A549 (cell line): ENCODE measurements at regions of chr14 and their contacts with region 1.

Region 1: GRCh38 chr14:64294672-64295413 is 672 bp upstream of the ESR2 start:
- DNase-seq: peak; percentile 68 to 84
- ATAC-seq: peak; percentile 93 to 98
- H3K4me3 ChIP-seq: peak overlapping the region; percentile 43
- H3K27ac ChIP-seq: peak overlapping the region; percentile 20 to 28; a peak in 2 of 6 replicates
- H3K4me1 ChIP-seq: 0 out of 3 replicates have a peak, but pooled peaks cover 3% of the 10 kb centered on the region
- CTCF ChIP-seq: peak; percentile 94
- EP300 ChIP-seq: no peak
- POLR2A ChIP-seq: no peak
- RAD21 ChIP-seq: peak; percentile 79 to 93

Region 2: GRCh38 chr14:63800651-63801375 is 494.0 kb before region 1 on chr14:
- CTCF ChIA-PET with region 1: interaction called, 36 read pairs
- POLR2A ChIA-PET with region 1: no interaction called
- DNase-seq: no peak
- ATAC-seq: peak in 1 of 2 experiments; percentile 36; a peak in 1 of 6 replicates
- H3K4me3 ChIP-seq: no peak overlapping the region
- H3K27ac ChIP-seq: no peak overlapping the region
- H3K4me1 ChIP-seq: no peaks in the 10 kb centered on the region
- CTCF ChIP-seq: no peak
- EP300 ChIP-seq: no peak
- POLR2A ChIP-seq: no peak
- RAD21 ChIP-seq: no peak

Region 3: GRCh38 chr14:64012720-64013119 is 282.1 kb before region 1 on chr14:
- CTCF ChIA-PET with region 1: interaction called, 100 read pairs
- POLR2A ChIA-PET with region 1: no interaction called
- DNase-seq: no peak
- ATAC-seq: no peak
- H3K4me3 ChIP-seq: no peak overlapping the region
- H3K27ac ChIP-seq: no peak overlapping the region
- H3K4me1 ChIP-seq: no peaks in the 10 kb centered on the region
- CTCF ChIP-seq: no peak
- EP300 ChIP-seq: no peak
- POLR2A ChIP-seq: no peak
- RAD21 ChIP-seq: no peak

Region 4: DNA sequence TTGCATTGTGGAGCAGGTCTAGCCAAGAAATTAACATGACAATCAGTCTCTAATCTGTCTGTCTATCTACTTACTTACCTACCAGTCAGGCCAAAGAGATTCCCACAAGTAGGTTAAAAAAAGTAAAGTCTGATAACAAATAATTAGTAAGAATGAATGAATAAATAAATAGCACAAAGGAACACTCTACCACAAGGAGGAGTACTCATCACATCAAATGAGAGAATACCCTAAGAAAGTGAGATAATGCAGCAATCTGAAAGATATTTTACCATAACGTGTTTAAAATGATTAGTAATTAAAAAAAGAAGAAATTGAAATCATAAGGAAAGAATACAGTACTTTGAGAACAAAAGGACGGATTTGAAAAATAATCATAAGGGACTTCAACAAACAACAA is 254.8 kb before region 1 on chr14:
- CTCF ChIA-PET with region 1: interaction called, 32 read pairs
- POLR2A ChIA-PET with region 1: no interaction called
- DNase-seq: peak in 1 of 2 experiments; percentile 13
- ATAC-seq: no peak
- H3K4me3 ChIP-seq: no peak overlapping the region
- H3K27ac ChIP-seq: no peak overlapping the region
- H3K4me1 ChIP-seq: no peaks in the 10 kb centered on the region
- CTCF ChIP-seq: peak; percentile 32; the same call in 2 of the 3 replicates
- EP300 ChIP-seq: no peak
- POLR2A ChIP-seq: no peak
- RAD21 ChIP-seq: peak; percentile 50 to 51; a peak in 3 of 5 replicates

Region 5: DNA sequence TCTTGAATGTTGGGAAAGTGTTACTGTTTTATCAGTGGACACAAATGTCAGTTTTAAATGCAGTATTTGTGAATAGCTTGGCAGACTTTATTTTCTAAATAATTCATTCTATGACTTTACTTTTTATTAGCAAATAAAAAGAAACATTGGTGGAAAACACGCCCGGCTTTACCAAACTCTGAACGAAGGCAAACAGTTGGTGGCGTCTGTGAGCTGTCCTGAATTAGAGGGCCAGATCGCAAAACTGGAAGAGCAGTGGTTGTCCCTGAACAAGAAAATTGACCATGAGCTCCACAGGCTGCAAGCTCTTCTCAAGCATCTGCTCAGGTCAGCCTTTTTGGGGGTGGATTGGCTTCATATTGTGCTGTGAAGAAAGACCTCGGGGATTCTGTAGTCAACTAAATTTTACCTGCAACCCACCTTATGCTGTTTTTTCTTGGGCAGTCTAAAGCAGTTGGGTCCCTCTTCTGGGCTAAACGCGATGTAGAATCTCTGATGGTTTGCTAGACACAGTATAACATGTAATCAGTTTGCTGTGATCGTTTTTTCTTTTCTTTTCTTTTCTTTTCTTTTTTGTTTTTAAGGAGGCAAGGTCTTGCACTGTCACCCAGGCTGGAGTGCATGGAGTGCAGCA is 157.1 kb before region 1 on chr14:
- CTCF ChIA-PET with region 1: interaction called, 16 read pairs
- POLR2A ChIA-PET with region 1: no interaction called
- DNase-seq: peak in 1 of 2 experiments; percentile 17
- ATAC-seq: peak in 1 of 2 experiments; percentile 50; a peak in 1 of 6 replicates
- H3K4me3 ChIP-seq: no peak overlapping the region
- H3K27ac ChIP-seq: no peak overlapping the region
- H3K4me1 ChIP-seq: no peaks in the 10 kb centered on the region
- CTCF ChIP-seq: no peak
- EP300 ChIP-seq: no peak
- POLR2A ChIP-seq: no peak
- RAD21 ChIP-seq: peak; percentile 27 to 53; a peak in 2 of 5 replicates

Region 6: GRCh38 chr14:64279704-64280668 is 14.9 kb before region 1 on chr14:
- CTCF ChIA-PET with region 1: interaction called, 16 read pairs
- POLR2A ChIA-PET with region 1: no interaction called
- DNase-seq: peak in 1 of 2 experiments; percentile 17
- ATAC-seq: 0 out of 6 replicates have a peak, but pooled peaks of 1 of the 2 experiments have one; percentile 47
- H3K4me3 ChIP-seq: no peak overlapping the region
- H3K27ac ChIP-seq: no peak overlapping the region
- H3K4me1 ChIP-seq: no peaks in the 10 kb centered on the region
- CTCF ChIP-seq: no peak
- EP300 ChIP-seq: no peak
- POLR2A ChIP-seq: no peak
- RAD21 ChIP-seq: no peak